ENCODE measurements at regions of chrX and their contacts with region 1.

Region 1: DNA sequence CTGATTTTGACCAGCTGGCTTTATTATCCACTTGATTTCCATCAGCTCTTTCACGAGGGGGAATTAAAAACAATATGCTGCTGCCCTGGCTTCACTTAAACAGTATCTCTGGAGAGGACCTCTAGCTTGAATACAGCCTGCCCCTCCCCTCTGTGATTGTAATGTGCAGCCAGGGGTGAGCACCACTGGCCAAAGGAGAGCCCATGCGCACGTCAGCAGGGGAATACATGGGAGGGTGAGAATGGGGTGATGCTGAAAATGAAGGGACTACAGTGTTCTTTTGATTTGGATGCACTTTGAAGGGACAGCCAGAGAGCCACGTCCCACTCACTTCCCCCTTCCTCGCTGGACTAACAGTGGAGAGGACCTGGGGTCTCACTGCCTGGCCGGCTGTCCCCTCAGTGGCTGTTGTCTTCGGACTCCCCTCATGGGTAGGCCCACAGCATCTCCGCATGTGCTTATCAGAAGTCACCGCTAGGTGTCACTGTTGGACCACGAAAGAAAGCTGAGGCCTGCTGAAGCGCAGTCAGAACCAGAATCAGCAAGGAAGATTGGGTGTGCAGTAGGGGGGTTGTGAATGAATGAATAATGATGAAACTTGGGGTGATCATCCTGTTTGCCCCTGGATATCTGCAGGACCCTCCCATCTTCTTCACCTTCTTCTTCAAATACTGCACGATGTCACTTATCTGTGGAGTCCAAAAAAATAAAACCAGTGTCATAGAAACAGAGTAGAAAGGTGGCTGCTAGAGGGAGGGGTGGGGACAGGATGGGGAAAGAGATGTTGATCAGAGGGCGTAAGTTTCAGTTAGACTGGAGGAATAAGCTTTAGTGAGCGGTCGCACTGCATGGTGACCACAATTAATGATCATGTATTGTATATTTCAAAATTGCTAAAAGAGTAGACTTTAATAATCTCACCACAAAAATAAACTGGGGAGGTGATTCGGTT is 32.8 kb downstream of the CLCN4 start:
- DNase-seq: peak; percentile 66 to 80 (median 71)
- ATAC-seq: peak; percentile 97
- H3K4me3 ChIP-seq: no peak overlapping the region
- H3K27ac ChIP-seq: no peak overlapping the region
- H3K4me1 ChIP-seq: no peaks in the 10 kb centered on the region; a peak in 2 of 5 replicates
- H3K27me3 ChIP-seq: peaks cover 0 to 1% of the 10 kb centered on the region in 2 experiments; a peak in 2 of 5 replicates
- CTCF ChIP-seq: peak; percentile 76 to 77 (median 76)
- EP300 ChIP-seq: no peak
- POLR2A ChIP-seq: no peak
- RAD21 ChIP-seq: peak; percentile 71 to 81

Region 2: GRCh38 chrX:10133980-10134676 is 55.5 kb before region 1 on chrX:
- CTCF ChIA-PET with region 1: no interaction called
- POLR2A ChIA-PET with region 1: no interaction called
- in situ Hi-C with region 1: no loop called
- intact Hi-C with region 1: loop called (anchors 1 kb)
- DNase-seq: peak; percentile 15 to 59 (median 36)
- ATAC-seq: peak; percentile 90
- H3K4me3 ChIP-seq: no peak overlapping the region; the same call in 1 of the 2 replicates
- H3K27ac ChIP-seq: peak overlapping the region; percentile 40; the same call in 2 of the 3 replicates
- H3K4me1 ChIP-seq: peaks cover 0 to 11% of the 10 kb centered on the region in 2 experiments; a peak in 4 of 5 replicates
- H3K27me3 ChIP-seq: peaks cover 0 to 4% of the 10 kb centered on the region in 2 experiments; a peak in 1 of 5 replicates
- CTCF ChIP-seq: peak; percentile 61 to 64 (median 62)
- EP300 ChIP-seq: no peak
- POLR2A ChIP-seq: no peak
- RAD21 ChIP-seq: peak; percentile 77 to 78

Region 3: GRCh38 chrX:10615931-10616775 is 426.6 kb after region 1 on chrX:
- CTCF ChIA-PET with region 1: interaction called, 11 read pairs
- POLR2A ChIA-PET with region 1: no interaction called
- in situ Hi-C with region 1: loop called (anchors 10 kb)
- intact Hi-C with region 1: loop called (anchors 5 kb)
- DNase-seq: peak; percentile 25 to 50 (median 44)
- ATAC-seq: peak; percentile 81
- H3K4me3 ChIP-seq: no peak overlapping the region
- H3K27ac ChIP-seq: no peak overlapping the region
- H3K4me1 ChIP-seq: peaks cover 0 to 5% of the 10 kb centered on the region in 2 experiments; a peak in 2 of 5 replicates
- H3K27me3 ChIP-seq: peaks cover 4 to 12% of the 10 kb centered on the region in 2 experiments
- CTCF ChIP-seq: peak; percentile 48 to 70 (median 62)
- EP300 ChIP-seq: no peak
- POLR2A ChIP-seq: no peak
- RAD21 ChIP-seq: peak in 1 of 2 experiments; percentile 53; a peak in 2 of 4 replicates

Region 4: GRCh38 chrX:10722851-10723250 is 533.3 kb after region 1 on chrX:
- CTCF ChIA-PET with region 1: interaction called, 10 read pairs
- POLR2A ChIA-PET with region 1: no interaction called
- in situ Hi-C with region 1: no loop called
- intact Hi-C with region 1: loop called (anchors 2 kb)
- DNase-seq: peak; percentile 47 to 57 (median 50)
- ATAC-seq: peak; percentile 86
- H3K4me3 ChIP-seq: no peak overlapping the region
- H3K27ac ChIP-seq: no peak overlapping the region
- H3K4me1 ChIP-seq: no peaks in the 10 kb centered on the region
- H3K27me3 ChIP-seq: no peaks in the 10 kb centered on the region
- CTCF ChIP-seq: peak; percentile 54 to 68 (median 64)
- EP300 ChIP-seq: no peak
- POLR2A ChIP-seq: no peak
- RAD21 ChIP-seq: peak; percentile 50 to 66

Region 5: DNA sequence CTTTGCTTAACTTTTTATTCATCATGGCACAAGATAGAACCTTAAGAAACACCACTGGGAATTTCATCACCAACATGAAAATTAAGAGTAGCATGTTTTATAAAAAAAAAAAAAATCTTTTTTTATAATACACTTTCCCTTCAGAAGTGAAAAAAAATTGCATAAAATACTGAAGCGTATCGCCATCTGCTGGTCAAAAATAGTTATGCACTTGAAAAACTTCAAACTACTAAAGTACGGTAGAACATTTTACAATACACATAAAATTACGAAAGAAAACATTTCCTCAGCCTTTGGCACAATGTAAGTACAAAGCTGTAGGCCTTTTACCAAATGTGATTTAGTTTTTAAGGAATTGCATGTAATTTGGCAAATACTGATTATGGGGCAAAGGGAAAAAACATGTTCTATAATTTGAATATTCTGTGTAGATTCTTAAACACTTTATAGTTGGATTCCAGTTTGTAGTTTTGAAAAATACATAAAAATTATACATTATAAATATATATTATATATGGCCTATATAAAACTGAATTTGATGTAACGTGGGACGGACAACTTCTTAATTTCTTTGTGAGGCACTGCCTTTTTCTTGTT is 948.0 kb after region 1 on chrX:
- CTCF ChIA-PET with region 1: interaction called, 18 read pairs
- POLR2A ChIA-PET with region 1: no interaction called
- in situ Hi-C with region 1: no loop called
- intact Hi-C with region 1: loop called (anchors 1 kb)
- DNase-seq: peak in 1 of 4 experiments; percentile 46
- ATAC-seq: no peak
- H3K4me3 ChIP-seq: no peak overlapping the region
- H3K27ac ChIP-seq: no peak overlapping the region
- H3K4me1 ChIP-seq: peaks cover 0 to 14% of the 10 kb centered on the region in 2 experiments; a peak in 2 of 5 replicates
- H3K27me3 ChIP-seq: no peaks in the 10 kb centered on the region
- CTCF ChIP-seq: peak in 2 of 3 experiments; percentile 24 to 62; a peak in 4 of 6 replicates
- EP300 ChIP-seq: no peak
- POLR2A ChIP-seq: no peak
- RAD21 ChIP-seq: peak; percentile 40; a peak in 3 of 4 replicates

Region 6: GRCh38 chrX:11758400-11759171 is 1569.0 kb after region 1 on chrX:
- CTCF ChIA-PET with region 1: no interaction called
- POLR2A ChIA-PET with region 1: no interaction called
- in situ Hi-C with region 1: loop called (anchors 25 kb)
- intact Hi-C with region 1: no loop called
- DNase-seq: peak; percentile 82 to 92 (median 86)
- ATAC-seq: peak; percentile 83
- H3K4me3 ChIP-seq: peak overlapping the region; percentile 79
- H3K27ac ChIP-seq: peak overlapping the region; percentile 74
- H3K4me1 ChIP-seq: peaks cover 6% of the 10 kb centered on the region in 2 experiments; a peak in 4 of 5 replicates
- H3K27me3 ChIP-seq: no peaks in the 10 kb centered on the region
- CTCF ChIP-seq: peak; percentile 41 to 65 (median 59); a peak in 4 of 6 replicates
- EP300 ChIP-seq: no peak
- POLR2A ChIP-seq: peak; percentile 54
- RAD21 ChIP-seq: 0 out of 4 replicates have a peak, but pooled peaks of 1 of the 2 experiments have one; percentile 8